ENCODE measurements at regions of chrX and their contacts with region 1.

Region 1: GRCh38 chrX:107776649-107777535 is 641 bp upstream of the NCBP2L start:
- DNase-seq: peak; percentile 85
- ATAC-seq: peak; percentile 70
- H3K4me3 ChIP-seq: peak overlapping the region; percentile 48 to 72 (median 60)
- H3K4me3 Mint-ChIP-seq: peak overlapping the region; percentile 84
- H3K27ac ChIP-seq: peak overlapping the region in 1 of 2 donors; percentile 12
- H3K27ac Mint-ChIP-seq: peak overlapping the region; percentile 79
- H3K4me1 ChIP-seq: peaks cover 14 to 23% of the 10 kb centered on the region in 2 donors
- H3K4me1 Mint-ChIP-seq: peaks cover 21% of the 10 kb centered on the region
- H3K27me3 ChIP-seq: peaks cover 0 to 9% (median 0%) of the 10 kb centered on the region in 4 experiments
- H3K27me3 Mint-ChIP-seq: no peaks in the 10 kb centered on the region
- CTCF ChIP-seq: peak; percentile 63

Region 2: GRCh38 chrX:106999002-106999975 is 777.6 kb before region 1 on chrX:
- CTCF ChIA-PET with region 1: interaction called, 14 read pairs
- POLR2A ChIA-PET with region 1: no interaction called
- intact Hi-C with region 1: loop called (anchors 1 kb)
- DNase-seq: peak; percentile 61
- ATAC-seq: peak; percentile 39
- H3K4me3 ChIP-seq: peak overlapping the region in 4 of 5 experiments; percentile 42 to 67 (median 54)
- H3K4me3 Mint-ChIP-seq: peak overlapping the region; percentile 81
- H3K27ac ChIP-seq: no peak overlapping the region
- H3K27ac Mint-ChIP-seq: peak overlapping the region; percentile 64
- H3K4me1 ChIP-seq: peaks cover 3 to 7% of the 10 kb centered on the region in 2 donors
- H3K4me1 Mint-ChIP-seq: peaks cover 4% of the 10 kb centered on the region
- H3K27me3 ChIP-seq: no peaks in the 10 kb centered on the region
- H3K27me3 Mint-ChIP-seq: no peaks in the 10 kb centered on the region
- CTCF ChIP-seq: peak; percentile 33

Region 3: DNA sequence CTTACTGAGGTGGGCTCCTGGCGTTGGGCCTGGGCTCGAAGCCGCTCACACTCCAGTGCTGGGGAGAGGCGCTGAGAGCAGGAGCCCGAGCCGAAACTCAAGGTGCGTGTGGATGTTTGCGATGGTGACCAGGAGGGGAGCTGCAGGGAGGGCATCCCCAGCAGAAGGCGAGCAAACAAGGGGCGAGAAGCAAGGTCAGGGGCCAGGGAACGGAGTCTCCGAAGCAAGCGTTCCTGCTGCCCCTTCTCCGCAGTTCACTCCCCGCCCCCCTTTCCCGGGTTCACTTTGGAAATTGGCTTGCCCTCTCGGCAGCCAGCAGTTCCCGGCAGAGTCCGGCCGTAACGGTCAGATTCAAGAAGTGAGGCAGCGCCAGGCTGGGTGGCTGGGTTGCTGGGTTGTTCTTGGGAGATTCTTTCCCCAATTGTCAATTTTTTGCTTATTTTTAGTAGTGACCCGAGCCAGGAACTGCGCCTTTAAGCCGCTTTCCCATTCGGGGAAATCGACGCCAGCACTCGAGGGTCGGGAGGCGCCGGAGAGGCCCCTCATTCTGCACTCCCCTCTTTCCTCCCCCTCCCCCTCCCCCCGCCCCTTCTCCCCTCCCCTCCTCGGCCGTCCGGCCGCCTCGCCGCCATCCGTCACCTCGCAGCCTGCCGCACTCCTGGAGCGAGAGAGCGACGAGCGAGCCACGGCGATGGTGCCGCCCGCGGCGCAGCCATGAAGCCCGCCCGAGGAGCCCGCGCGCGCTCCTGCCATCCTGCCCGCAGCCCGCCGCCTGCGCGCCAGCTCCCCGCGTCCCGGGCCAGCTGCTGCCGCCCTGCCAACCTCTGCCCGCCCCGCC is 327.7 kb before region 1 on chrX and contains the start of gene FRMPD3:
- CTCF ChIA-PET with region 1: no interaction called
- POLR2A ChIA-PET with region 1: no interaction called
- intact Hi-C with region 1: loop called (anchors 2 kb)
- DNase-seq: peak; percentile 45
- ATAC-seq: peak; percentile 44
- H3K4me3 ChIP-seq: peak within 1 kb of the TSS in 4 of 5 experiments; percentile 44 to 57 (median 56)
- H3K4me3 Mint-ChIP-seq: peak within 1 kb of the TSS; percentile 87
- H3K27ac ChIP-seq: no peak within 1 kb of the TSS
- H3K27ac Mint-ChIP-seq: peak within 1 kb of the TSS; percentile 84
- H3K4me1 ChIP-seq: peaks cover 20 to 37% of the 10 kb centered on the region in 2 donors
- H3K4me1 Mint-ChIP-seq: peaks cover 28% of the 10 kb centered on the region
- H3K27me3 ChIP-seq: peaks cover 0 to 15% (median 2%) of the 10 kb centered on the region in 4 experiments
- H3K27me3 Mint-ChIP-seq: peaks cover 7% of the 10 kb centered on the region
- CTCF ChIP-seq: no peak
- total RNA-seq, gene FRMPD3: 1.1 TPM in 2 replicates

Region 4: DNA sequence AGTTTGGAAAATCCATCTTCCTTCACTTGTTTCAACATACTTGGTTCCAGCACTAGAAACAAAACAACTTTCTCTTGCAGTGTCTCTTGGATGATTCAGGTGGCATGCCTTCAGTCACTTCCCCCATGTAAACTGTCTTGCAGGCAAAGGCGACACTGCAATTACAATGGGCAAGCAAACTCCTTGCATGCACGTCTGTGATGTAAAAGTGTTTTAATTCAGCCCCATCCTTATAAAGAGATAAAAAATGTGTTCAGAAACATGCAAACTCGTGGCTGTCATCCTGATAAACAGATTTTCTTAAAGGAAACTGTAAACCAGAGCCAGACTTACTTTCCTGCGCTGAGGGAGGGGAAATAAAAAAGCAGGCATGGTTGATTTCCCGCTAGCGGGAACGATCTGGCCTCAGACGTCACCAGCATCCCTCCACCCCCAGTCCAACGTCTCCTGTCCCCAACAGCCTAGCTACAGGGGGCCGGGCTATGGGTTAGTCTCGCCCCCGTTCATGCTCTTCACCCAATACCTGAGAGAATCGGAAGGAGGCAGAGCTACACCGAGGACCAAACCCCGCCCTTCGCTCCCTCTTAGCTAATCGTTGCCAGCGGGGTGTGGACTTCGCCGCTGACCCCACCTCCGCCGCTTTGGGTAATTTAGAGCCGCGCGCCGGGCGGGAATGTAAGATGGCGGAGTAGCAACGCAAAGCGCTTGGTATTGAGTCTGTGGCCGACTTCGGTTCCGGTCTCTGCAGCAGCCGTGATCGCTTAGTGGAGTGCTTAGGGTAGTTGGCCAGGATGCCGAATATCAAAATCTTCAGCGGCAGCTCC is 148.8 kb before region 1 on chrX and contains the start of gene PRPS1:
- CTCF ChIA-PET with region 1: interaction called, 20 read pairs
- POLR2A ChIA-PET with region 1: interaction called, 7 read pairs
- intact Hi-C with region 1: loop called (anchors 1 kb)
- DNase-seq: peak; percentile 91
- ATAC-seq: peak; percentile 99
- H3K4me3 ChIP-seq: peak within 1 kb of the TSS; percentile 51 to 83 (median 75)
- H3K4me3 Mint-ChIP-seq: peak within 1 kb of the TSS; percentile 97
- H3K27ac ChIP-seq: peak within 1 kb of the TSS; percentile 80
- H3K27ac Mint-ChIP-seq: peak within 1 kb of the TSS; percentile 92
- H3K4me1 ChIP-seq: peaks cover 8 to 19% of the 10 kb centered on the region in 2 donors
- H3K4me1 Mint-ChIP-seq: peaks cover 31% of the 10 kb centered on the region
- H3K27me3 ChIP-seq: no peaks in the 10 kb centered on the region
- H3K27me3 Mint-ChIP-seq: no peaks in the 10 kb centered on the region
- CTCF ChIP-seq: no peak
- total RNA-seq, gene PRPS1: 45.0 and 52.1 TPM in 2 replicates

Region 5: GRCh38 chrX:107662824-107663223 is 114.1 kb before region 1 on chrX:
- CTCF ChIA-PET with region 1: interaction called, 246 read pairs
- POLR2A ChIA-PET with region 1: interaction called, 4 read pairs
- intact Hi-C with region 1: loop called (anchors 1 kb)
- DNase-seq: no peak
- ATAC-seq: no peak
- H3K4me3 ChIP-seq: no peak overlapping the region
- H3K4me3 Mint-ChIP-seq: no peak overlapping the region
- H3K27ac ChIP-seq: no peak overlapping the region
- H3K27ac Mint-ChIP-seq: no peak overlapping the region
- H3K4me1 ChIP-seq: no peaks in the 10 kb centered on the region
- H3K4me1 Mint-ChIP-seq: peaks cover 10% of the 10 kb centered on the region
- H3K27me3 ChIP-seq: no peaks in the 10 kb centered on the region
- H3K27me3 Mint-ChIP-seq: no peaks in the 10 kb centered on the region
- CTCF ChIP-seq: no peak

Region 6: DNA sequence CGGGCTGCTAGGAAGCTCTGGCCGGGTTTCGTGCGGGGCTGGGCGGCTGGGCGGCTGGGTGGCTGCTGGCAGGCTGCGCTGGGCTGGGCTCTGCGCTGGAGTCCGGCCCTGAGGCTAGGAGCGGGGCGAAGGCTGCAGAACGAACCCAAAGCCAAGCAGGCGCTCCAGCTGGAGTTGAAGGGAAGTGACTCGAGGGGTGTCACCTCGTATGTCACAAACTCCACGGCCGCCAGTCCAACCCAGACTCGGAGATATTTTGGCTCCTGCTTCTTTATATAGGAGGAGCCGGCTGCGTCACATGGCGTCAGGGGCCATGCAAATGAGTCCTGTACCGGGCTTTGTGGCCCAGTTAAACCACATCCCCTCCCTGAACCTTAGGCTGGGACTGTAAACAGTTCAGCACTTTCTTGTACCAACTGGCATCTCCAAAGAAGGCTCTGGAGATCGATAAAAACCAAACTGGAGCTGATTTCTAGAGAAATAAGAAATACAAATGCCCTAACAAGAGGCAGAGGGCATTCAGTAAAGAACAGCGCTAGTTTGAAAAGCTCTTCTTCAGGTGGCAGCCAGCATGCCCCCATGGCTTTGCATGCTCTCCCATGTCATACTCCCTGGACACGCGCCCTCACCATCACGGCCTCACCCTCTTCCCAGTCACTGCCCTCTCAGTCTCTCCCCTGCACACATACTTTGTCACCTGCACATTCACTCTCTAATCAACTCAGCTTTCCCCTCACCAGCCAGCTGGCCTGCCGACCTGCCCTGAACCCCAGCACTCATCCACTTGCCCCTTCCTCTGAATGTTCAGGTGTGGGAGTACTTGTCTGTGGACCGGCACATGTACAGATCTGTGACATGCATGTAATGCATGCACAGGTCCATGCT is 59.8 kb before region 1 on chrX:
- CTCF ChIA-PET with region 1: interaction called, 98 read pairs
- POLR2A ChIA-PET with region 1: interaction called, 17 read pairs
- intact Hi-C with region 1: loop called (anchors 1 kb)
- DNase-seq: peak; percentile 94
- ATAC-seq: peak; percentile 60
- H3K4me3 ChIP-seq: peak overlapping the region; percentile 59 to 96 (median 86)
- H3K4me3 Mint-ChIP-seq: peak overlapping the region; percentile 97
- H3K27ac ChIP-seq: peak overlapping the region; percentile 99
- H3K27ac Mint-ChIP-seq: peak overlapping the region; percentile 100
- H3K4me1 ChIP-seq: peaks cover 63 to 85% of the 10 kb centered on the region in 2 donors
- H3K4me1 Mint-ChIP-seq: peaks cover 75% of the 10 kb centered on the region
- H3K27me3 ChIP-seq: no peaks in the 10 kb centered on the region
- H3K27me3 Mint-ChIP-seq: no peaks in the 10 kb centered on the region
- CTCF ChIP-seq: no peak

Region 7: GRCh38 chrX:107894038-107894437 is 117.1 kb after region 1 on chrX:
- CTCF ChIA-PET with region 1: interaction called, 3 read pairs
- POLR2A ChIA-PET with region 1: no interaction called
- intact Hi-C with region 1: loop called (anchors 1 kb)
- DNase-seq: peak; percentile 59
- ATAC-seq: no peak
- H3K4me3 ChIP-seq: no peak overlapping the region
- H3K4me3 Mint-ChIP-seq: no peak overlapping the region
- H3K27ac ChIP-seq: no peak overlapping the region
- H3K27ac Mint-ChIP-seq: no peak overlapping the region
- H3K4me1 ChIP-seq: no peaks in the 10 kb centered on the region
- H3K4me1 Mint-ChIP-seq: no peaks in the 10 kb centered on the region
- H3K27me3 ChIP-seq: no peaks in the 10 kb centered on the region
- H3K27me3 Mint-ChIP-seq: peaks cover 11% of the 10 kb centered on the region
- CTCF ChIP-seq: peak; percentile 73

Measured in B cell (primary cell).